Left lung (tissue), 14 donors: ENCODE measurements at regions of chr6 and their contacts with region 1.

Region 1: GRCh38 chr6:44338228-44339122 is 4.0 kb upstream of the SPATS1 start:
- DNase-seq: peak in 2 of 4 donors; percentile 37 to 64
- ATAC-seq: peak; percentile 91
- H3K4me3 ChIP-seq: no peak overlapping the region
- H3K27ac ChIP-seq: no peak overlapping the region
- H3K4me1 ChIP-seq: peaks cover 0 to 17% of the 10 kb centered on the region in 2 donors
- H3K27me3 ChIP-seq: peaks cover 13 to 51% of the 10 kb centered on the region in 2 donors
- CTCF ChIP-seq: peak; percentile 51 to 68

Region 2: GRCh38 chr6:44265007-44265721 is 73.3 kb before region 1 on chr6 and contains the start of gene NFKBIE:
- intact Hi-C with region 1: loop called in 1 of 2 experiments (anchors 5 kb)
- DNase-seq: peak; percentile 91 to 99 (median 96)
- ATAC-seq: peak; percentile 89
- H3K4me3 ChIP-seq: peak within 1 kb of the TSS; percentile 83 to 87
- H3K27ac ChIP-seq: peak within 1 kb of the TSS; percentile 85 to 90
- H3K4me1 ChIP-seq: peaks cover 28 to 58% of the 10 kb centered on the region in 2 donors
- H3K27me3 ChIP-seq: peaks cover 11 to 21% of the 10 kb centered on the region in 2 donors
- CTCF ChIP-seq: peak in 1 of 2 donors; percentile 41
- polyA plus RNA-seq, gene NFKBIE: 7.5 to 9.2 (median 8.7) TPM

Region 3: DNA sequence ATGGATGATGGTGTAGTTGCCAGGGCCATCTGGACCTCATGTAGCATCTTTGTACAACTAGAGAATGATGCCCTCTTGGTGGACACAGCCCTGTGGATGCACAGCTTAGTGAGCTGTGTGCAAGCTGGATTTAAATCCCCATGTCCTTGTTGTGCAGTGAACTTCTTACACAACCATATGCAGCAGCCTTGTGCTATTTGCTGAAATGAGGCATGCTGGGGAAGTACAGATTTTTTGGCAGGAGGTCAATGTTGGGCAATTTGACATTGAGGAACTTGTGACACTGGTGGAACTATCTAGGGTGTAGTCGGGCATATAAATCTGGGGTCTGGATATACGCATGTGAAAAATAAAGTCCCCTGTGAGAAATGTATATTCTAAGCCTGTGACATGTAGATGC is 43.3 kb after region 1 on chr6:
- intact Hi-C with region 1: no loop called
- DNase-seq: peak in 1 of 4 donors; percentile 42
- ATAC-seq: peak; percentile 23
- H3K4me3 ChIP-seq: no peak overlapping the region
- H3K27ac ChIP-seq: no peak overlapping the region
- H3K4me1 ChIP-seq: peaks cover 0 to 14% of the 10 kb centered on the region in 2 donors
- H3K27me3 ChIP-seq: no peaks in the 10 kb centered on the region
- CTCF ChIP-seq: no peak